PC-3 (cell line): ENCODE measurements at regions of chr12 and their contacts with region 1.

Region 1: DNA sequence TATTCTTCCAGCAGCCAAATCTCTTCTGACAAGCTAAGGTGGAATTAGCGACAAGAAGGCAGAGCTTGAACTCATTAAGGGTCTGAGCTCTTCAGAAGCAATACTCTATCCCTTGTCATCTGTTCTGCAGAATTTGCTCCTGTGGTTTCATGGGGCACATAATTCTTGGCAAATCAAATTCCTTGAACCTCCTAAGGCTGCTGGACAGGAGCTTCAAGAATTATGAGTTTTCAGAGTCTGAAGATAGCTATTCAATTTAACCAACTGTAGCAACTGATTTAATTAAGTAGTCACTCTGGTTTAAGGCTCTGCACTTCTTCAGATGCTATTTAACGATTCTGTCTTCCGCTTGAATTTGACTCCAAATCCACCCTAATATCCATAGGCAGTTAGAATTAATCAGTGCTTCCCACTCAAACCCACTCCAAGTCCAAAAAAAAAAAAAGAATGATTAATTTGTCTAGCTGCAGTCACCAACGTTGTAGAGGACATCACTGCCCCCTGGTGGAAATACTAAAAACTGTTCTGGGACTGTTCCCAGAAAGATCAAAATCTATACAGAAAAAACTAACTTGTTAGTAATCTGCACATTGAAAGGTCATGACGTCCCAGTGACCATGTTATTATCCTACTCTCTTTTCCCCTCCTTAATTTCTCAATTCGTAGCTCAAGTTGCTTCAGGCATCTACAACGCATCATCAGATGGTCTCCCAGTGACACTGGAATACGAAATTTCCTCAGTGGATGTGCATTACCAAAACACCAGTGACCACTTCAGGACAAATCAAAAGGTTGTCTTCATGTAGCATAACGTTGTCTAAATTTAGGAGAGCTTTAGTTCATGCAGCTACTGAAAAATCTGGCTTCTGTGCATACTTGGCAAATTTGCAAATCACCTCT is 169.8 kb downstream of the KIF21A start:
- DNase-seq: peak; percentile 67
- ATAC-seq: no peak
- H3K4me3 ChIP-seq: no peak overlapping the region
- H3K27ac ChIP-seq: no peak overlapping the region
- H3K4me1 ChIP-seq: no peaks in the 10 kb centered on the region
- H3K27me3 ChIP-seq: no peaks in the 10 kb centered on the region
- CTCF ChIP-seq: peak; percentile 85

Region 2: GRCh38 chr12:38324896-38325295 is 948.2 kb before region 1 on chr12:
- CTCF ChIA-PET with region 1: no interaction called
- POLR2A ChIA-PET with region 1: no interaction called
- intact Hi-C with region 1: loop called (anchors 5 kb)
- DNase-seq: no peak
- ATAC-seq: no peak
- H3K4me3 ChIP-seq: no peak overlapping the region
- H3K27ac ChIP-seq: no peak overlapping the region
- H3K4me1 ChIP-seq: 0 out of 2 replicates have a peak, but pooled peaks cover 3% of the 10 kb centered on the region
- H3K27me3 ChIP-seq: no peaks in the 10 kb centered on the region
- CTCF ChIP-seq: no peak

Region 3: DNA sequence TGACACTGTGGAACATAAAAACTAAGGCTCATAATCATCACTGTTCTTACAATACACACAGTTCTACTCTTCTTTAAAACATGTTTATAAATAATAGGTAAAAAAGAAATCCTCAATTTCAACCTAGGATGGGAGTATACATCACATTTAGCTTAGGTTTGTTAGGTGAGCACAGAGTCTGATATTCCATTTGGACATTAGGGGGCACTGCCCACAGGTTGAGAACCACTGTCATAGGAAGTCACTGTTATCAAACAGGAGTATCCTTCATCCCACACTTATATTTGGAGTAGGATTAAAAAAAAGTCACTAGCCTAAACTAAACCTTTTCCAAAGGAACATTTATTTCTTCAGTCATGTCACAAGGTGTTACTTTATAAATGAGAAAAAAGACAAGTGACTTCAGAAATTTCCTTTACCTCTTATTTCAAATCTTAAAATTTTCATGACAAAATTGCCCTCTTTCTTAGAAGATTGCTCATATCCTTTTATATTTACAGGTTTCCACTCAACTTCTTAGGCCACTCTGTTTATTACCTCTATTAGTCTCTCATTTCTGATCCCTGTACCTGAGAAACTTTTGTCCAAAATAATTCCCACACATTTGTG is 608.4 kb before region 1 on chr12:
- CTCF ChIA-PET with region 1: no interaction called
- POLR2A ChIA-PET with region 1: no interaction called
- intact Hi-C with region 1: loop called (anchors 10 kb)
- DNase-seq: peak; percentile 65
- ATAC-seq: peak; percentile 87
- H3K4me3 ChIP-seq: no peak overlapping the region
- H3K27ac ChIP-seq: no peak overlapping the region
- H3K4me1 ChIP-seq: no peaks in the 10 kb centered on the region
- H3K27me3 ChIP-seq: no peaks in the 10 kb centered on the region
- CTCF ChIP-seq: peak; percentile 87

Region 4: GRCh38 chr12:38921025-38921677 is 352.0 kb before region 1 on chr12:
- CTCF ChIA-PET with region 1: interaction called, 16 read pairs
- POLR2A ChIA-PET with region 1: no interaction called
- intact Hi-C with region 1: loop called (anchors 1 kb)
- DNase-seq: peak; percentile 92
- ATAC-seq: peak; percentile 96
- H3K4me3 ChIP-seq: no peak overlapping the region
- H3K27ac ChIP-seq: no peak overlapping the region
- H3K4me1 ChIP-seq: peaks cover 11% of the 10 kb centered on the region
- H3K27me3 ChIP-seq: no peaks in the 10 kb centered on the region
- CTCF ChIP-seq: peak; percentile 85

Region 5: GRCh38 chr12:39145175-39145999 is 127.7 kb before region 1 on chr12:
- CTCF ChIA-PET with region 1: interaction called, 4 read pairs
- POLR2A ChIA-PET with region 1: no interaction called
- intact Hi-C with region 1: loop called (anchors 1 kb)
- DNase-seq: peak; percentile 70
- ATAC-seq: peak; percentile 99
- H3K4me3 ChIP-seq: peak overlapping the region; percentile 67
- H3K27ac ChIP-seq: no peak overlapping the region
- H3K4me1 ChIP-seq: peaks cover 3% of the 10 kb centered on the region; the same call in 1 of the 2 replicates
- H3K27me3 ChIP-seq: no peaks in the 10 kb centered on the region
- CTCF ChIP-seq: peak; percentile 80

Region 6: DNA sequence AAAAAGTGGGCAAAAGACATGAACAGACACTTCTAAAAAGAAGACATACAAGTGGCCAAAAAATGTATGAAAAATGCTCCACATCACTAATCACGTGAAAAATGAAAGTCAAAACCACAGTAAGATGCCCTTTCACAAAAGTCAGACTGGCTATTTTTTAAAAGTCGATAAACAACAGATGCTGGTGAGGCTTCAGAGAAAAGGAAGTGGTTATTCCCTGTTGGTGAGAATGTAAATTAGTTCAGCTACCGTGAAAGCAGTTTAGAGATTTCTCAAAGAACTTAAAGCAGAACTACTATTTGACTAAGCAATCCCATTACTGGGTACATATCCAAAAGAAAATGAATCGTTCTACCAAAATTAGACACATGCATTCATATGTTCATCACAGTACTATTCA is 67.2 kb before region 1 on chr12:
- CTCF ChIA-PET with region 1: interaction called, 7 read pairs
- POLR2A ChIA-PET with region 1: no interaction called
- intact Hi-C with region 1: loop called (anchors 2 kb)
- DNase-seq: no peak
- ATAC-seq: no peak
- H3K4me3 ChIP-seq: no peak overlapping the region
- H3K27ac ChIP-seq: no peak overlapping the region
- H3K4me1 ChIP-seq: no peaks in the 10 kb centered on the region
- H3K27me3 ChIP-seq: no peaks in the 10 kb centered on the region
- CTCF ChIP-seq: no peak

Region 7: GRCh38 chr12:39499296-39499695 is 226.2 kb after region 1 on chr12:
- CTCF ChIA-PET with region 1: no interaction called
- POLR2A ChIA-PET with region 1: no interaction called
- intact Hi-C with region 1: no loop called
- DNase-seq: no peak
- ATAC-seq: no peak
- H3K4me3 ChIP-seq: no peak overlapping the region
- H3K27ac ChIP-seq: no peak overlapping the region
- H3K4me1 ChIP-seq: peaks cover 19% of the 10 kb centered on the region
- H3K27me3 ChIP-seq: no peaks in the 10 kb centered on the region
- CTCF ChIP-seq: no peak